Activated T-helper 1 cell treated with anti-CD3 and anti-CD28 coated beads, Interleukin-12 subunit alpha, Interleukin-12 subunit beta, Interleukin-2, Interleukin-4 antibody, amounts not matched to agents 30 ng/mL and 10 ng/mL and 1 ng/mL, durations not matched to agents 14 hours and 24 hours and 36 hours (primary cell): ENCODE measurements at regions of chr20 and their contacts with region 1.

Region 1: GRCh38 chr20:18507218-18508021 is at the start of gene SEC23B:
- DNase-seq: peak; percentile 97
- H3K4me3 Mint-ChIP-seq: peak within 1 kb of the TSS; percentile 99
- H3K27ac Mint-ChIP-seq: peak within 1 kb of the TSS; percentile 100
- H3K4me1 Mint-ChIP-seq: peaks cover 44% of the 10 kb centered on the region
- H3K27me3 Mint-ChIP-seq: peaks cover 2% of the 10 kb centered on the region
- total RNA-seq, gene SEC23B: 110 and 113 TPM in 2 replicates

Region 2: DNA sequence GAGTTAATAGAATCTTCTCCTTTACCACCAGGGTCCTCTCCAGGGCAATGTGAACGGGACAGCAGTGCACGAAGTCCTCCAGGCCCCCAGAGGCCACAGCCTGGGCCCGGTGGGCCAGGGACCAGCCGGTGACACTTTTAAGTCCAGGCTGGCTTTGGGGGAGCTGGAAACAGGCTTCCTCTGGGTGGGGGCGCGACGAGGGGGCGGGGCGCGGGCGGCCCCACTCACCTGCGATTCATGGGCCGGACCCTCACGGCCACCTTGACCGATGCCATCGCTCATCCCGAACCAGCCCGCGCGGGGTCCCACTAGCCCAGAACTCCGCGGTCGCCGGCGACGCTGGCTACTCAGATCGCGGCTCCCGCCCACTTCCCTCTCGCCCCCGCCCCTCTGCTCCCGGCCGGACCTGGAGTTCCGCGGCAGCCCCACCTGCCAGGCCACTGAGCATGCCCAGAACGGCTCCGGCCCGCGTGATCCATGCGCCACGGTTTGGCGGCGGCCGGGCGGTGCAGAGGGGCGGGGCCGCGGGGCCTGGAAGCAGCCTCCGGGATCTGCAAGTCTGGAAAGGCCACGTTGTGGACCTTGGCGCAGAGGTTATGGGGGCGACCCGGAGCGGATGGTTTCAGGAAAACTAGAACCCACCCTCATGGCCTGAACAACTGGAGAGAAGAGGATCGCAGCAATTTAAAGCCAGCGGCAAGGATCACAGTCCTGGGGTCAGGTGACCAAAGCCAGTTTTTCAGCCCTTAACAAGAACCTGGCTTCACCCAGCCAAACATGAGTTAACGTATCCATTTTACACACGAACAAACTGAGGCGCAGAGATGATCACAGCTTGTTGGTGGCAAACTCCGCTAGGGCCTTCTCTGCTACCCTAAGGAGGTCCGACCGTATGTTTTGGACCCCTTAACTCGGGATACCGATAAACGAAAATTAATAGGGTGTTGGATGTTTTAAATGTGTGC is 1934.1 kb before region 1 on chr20 and contains the start of gene KIF16B:
- intact Hi-C with region 1: loop called (anchors 10 kb)
- DNase-seq: peak; percentile 83
- H3K4me3 Mint-ChIP-seq: peak within 1 kb of the TSS; percentile 90
- H3K27ac Mint-ChIP-seq: peak within 1 kb of the TSS; percentile 91
- H3K4me1 Mint-ChIP-seq: peaks cover 36% of the 10 kb centered on the region
- H3K27me3 Mint-ChIP-seq: no peaks in the 10 kb centered on the region
- total RNA-seq, gene KIF16B: 7.2 and 8.1 TPM in 2 replicates

Region 3: GRCh38 chr20:17569616-17570346 is 937.6 kb before region 1 on chr20 and contains the start of gene DSTN:
- intact Hi-C with region 1: loop called (anchors 1 kb)
- DNase-seq: peak; percentile 86
- H3K4me3 Mint-ChIP-seq: peak within 1 kb of the TSS; percentile 94
- H3K27ac Mint-ChIP-seq: peak within 1 kb of the TSS; percentile 93
- H3K4me1 Mint-ChIP-seq: peaks cover 19% of the 10 kb centered on the region
- H3K27me3 Mint-ChIP-seq: peaks cover 6% of the 10 kb centered on the region
- total RNA-seq, gene DSTN: 58.2 and 58.8 TPM in 2 replicates

Region 4: GRCh38 chr20:18279242-18279641 is 228.2 kb before region 1 on chr20:
- intact Hi-C with region 1: no loop called
- DNase-seq: no peak
- H3K4me3 Mint-ChIP-seq: no peak overlapping the region
- H3K27ac Mint-ChIP-seq: no peak overlapping the region
- H3K4me1 Mint-ChIP-seq: peaks cover 10% of the 10 kb centered on the region
- H3K27me3 Mint-ChIP-seq: peaks cover 37% of the 10 kb centered on the region

Region 5: GRCh38 chr20:18466894-18467730 is 40.3 kb before region 1 on chr20 and contains the starts of genes DZANK1 and POLR3F:
- intact Hi-C with region 1: loop called (anchors 1 kb)
- DNase-seq: peak; percentile 90
- H3K4me3 Mint-ChIP-seq: peak within 1 kb of the TSS; percentile 99
- H3K27ac Mint-ChIP-seq: peak within 1 kb of the TSS; percentile 92
- H3K4me1 Mint-ChIP-seq: peaks cover 31% of the 10 kb centered on the region
- H3K27me3 Mint-ChIP-seq: no peaks in the 10 kb centered on the region
- total RNA-seq, gene DZANK1: 1.1 and 1.8 TPM in 2 replicates
- total RNA-seq, gene POLR3F: 13.4 and 16.6 TPM in 2 replicates

Region 6: DNA sequence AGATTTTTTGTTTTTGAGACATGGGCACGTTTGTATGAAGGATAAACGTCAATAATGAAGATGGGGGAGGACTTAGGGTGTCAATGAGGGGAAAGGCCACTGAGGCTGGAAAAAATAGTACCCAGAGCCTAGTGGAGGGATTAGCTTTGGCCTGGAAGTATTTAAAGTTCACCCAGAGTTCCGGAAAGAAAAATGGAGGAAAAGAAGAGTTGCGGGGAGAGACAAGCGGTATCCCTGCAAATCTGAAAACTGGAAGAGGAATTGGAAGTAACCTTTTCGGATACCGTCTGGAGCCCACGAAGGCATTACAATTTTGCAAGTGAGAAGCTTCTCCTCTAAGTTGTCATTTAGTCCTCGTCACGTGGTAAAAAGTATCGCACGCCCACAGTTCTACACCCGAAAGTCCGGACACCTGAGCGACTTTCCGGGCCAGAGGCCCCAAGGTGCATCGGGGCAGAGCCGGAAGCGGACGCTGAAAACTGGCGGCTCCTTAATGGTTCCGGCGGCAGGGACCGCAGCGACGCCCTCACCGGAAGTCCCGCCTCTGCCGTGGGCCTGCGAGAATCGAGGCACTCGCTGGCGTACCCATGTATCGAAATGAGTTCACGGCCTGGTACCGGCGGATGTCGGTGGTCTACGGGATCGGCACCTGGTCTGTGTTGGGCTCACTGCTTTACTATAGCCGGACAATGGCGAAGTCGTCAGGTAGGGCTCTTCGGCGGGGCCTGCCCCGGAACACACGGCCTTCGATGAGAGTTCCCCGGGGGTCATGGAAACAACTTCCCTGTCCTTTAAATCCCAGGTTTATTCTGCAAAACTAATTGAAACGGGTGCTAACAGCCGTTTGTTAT is 59.7 kb after region 1 on chr20 and contains the start of gene SMIM26:
- intact Hi-C with region 1: loop called (anchors 1 kb)
- DNase-seq: peak; percentile 91
- H3K4me3 Mint-ChIP-seq: peak within 1 kb of the TSS; percentile 95
- H3K27ac Mint-ChIP-seq: peak within 1 kb of the TSS; percentile 95
- H3K4me1 Mint-ChIP-seq: peaks cover 10% of the 10 kb centered on the region
- H3K27me3 Mint-ChIP-seq: no peaks in the 10 kb centered on the region
- total RNA-seq, gene SMIM26: 54.9 and 57.9 TPM in 2 replicates

Region 7: GRCh38 chr20:18645851-18646250 is 138.4 kb after region 1 on chr20:
- intact Hi-C with region 1: no loop called
- DNase-seq: no peak
- H3K4me3 Mint-ChIP-seq: no peak overlapping the region
- H3K27ac Mint-ChIP-seq: no peak overlapping the region
- H3K4me1 Mint-ChIP-seq: no peaks in the 10 kb centered on the region
- H3K27me3 Mint-ChIP-seq: no peaks in the 10 kb centered on the region

Region 8: DNA sequence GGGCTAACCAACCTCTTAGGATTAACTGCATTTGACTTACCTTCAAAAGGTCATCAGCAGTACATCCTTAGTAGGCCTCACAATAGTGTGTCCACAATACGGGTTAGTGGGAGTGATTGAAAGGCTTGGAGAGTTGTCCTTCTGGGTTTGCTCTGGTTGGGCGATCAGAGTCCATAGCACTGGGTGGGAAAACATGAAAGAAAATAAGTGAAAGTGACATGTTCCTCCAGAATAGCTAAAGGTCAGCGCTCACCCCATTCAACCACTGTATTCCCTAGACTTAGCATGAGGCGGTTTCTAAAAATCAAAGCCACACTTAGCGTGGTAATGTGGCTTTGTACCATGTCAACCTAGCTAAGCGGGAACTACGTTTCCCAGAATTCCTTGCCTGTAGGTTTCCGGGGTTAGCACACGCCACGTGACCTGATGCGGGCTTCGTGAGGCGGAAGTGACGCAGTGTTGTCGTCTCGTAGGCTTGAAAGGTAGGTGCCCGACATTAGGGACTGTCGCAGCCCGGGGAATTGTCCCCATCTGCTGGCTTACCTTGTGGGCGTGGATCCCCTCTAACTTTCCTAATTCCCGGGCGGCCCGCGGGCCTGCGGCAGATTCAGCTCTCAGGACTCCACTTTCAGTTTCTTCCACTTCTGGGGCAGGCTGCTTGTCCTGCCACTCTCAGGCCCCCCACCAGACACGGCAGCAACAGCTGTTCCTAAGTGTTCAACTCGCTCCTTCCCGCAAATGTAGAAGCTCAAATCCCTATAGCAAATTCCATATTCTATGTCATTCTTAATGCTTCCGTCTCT is 286.4 kb after region 1 on chr20:
- intact Hi-C with region 1: loop called (anchors 1 kb)
- DNase-seq: peak; percentile 80
- H3K4me3 Mint-ChIP-seq: peak overlapping the region; percentile 87
- H3K27ac Mint-ChIP-seq: peak overlapping the region; percentile 82
- H3K4me1 Mint-ChIP-seq: peaks cover 12% of the 10 kb centered on the region
- H3K27me3 Mint-ChIP-seq: no peaks in the 10 kb centered on the region